HCT116 (cell line): ENCODE measurements at regions of chr4 and their contacts with region 1.

Region 1: GRCh38 chr4:110211007-110211769 is 12.8 kb upstream of the ELOVL6 start:
- DNase-seq: no peak
- ATAC-seq: peak; percentile 84
- H3K4me3 ChIP-seq: no peak overlapping the region
- H3K27ac ChIP-seq: no peak overlapping the region
- H3K4me1 ChIP-seq: no peaks in the 10 kb centered on the region
- H3K27me3 ChIP-seq: no peaks in the 10 kb centered on the region
- CTCF ChIP-seq: peak; percentile 51 to 82 (median 80); a peak in 5 of 6 replicates
- POLR2A ChIP-seq: no peak
- RAD21 ChIP-seq: peak; percentile 73

Region 2: DNA sequence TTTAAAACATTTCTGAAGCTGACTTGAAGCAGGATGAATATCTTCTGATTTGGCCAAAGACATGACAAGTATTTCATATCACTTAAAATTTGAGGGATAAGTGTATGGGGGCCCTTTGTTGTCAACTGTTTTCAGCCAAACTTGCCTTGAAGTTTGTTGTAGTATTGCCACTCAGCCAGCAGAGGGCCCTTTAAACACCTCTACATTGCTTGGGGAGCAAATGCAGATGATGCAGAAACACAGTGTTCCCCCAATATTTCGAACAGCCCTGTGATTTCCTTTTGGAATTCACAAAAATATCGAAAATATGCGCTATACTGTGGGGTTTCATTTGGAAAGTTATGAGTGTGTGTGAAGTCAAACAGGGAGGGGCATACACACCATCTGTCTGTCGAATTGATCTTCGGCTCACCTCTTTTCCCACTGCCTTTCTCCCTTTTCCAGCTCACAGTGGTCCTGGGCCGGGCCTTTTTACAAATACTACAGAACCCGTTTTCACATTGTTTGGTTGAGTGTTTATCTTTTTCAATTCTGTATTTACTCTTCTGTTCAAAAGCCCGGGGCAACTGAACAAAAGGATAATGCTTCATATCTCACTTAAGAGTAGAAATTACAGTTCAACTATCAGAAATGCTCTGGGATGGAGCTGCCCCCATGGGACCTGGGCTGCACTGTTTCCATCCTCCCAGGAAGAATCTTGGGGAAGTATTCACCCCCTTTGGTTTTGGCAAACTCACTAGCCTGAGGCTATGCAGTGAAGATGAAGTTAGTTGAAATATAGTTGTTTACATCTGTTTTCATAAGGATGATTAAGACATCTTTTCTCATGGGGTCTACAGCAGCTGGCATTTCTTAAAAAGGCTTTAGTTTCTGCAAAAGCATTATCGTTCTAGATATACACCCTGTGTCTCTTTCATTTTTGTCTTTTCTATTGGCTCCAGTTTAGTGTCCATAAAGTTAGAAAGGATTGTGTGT is 160.9 kb before region 1 on chr4:
- CTCF ChIA-PET with region 1: no interaction called
- POLR2A ChIA-PET with region 1: no interaction called
- RAD21 ChIA-PET with region 1: no interaction called
- intact Hi-C with region 1: loop called (anchors 1 kb)
- DNase-seq: peak; percentile 8
- ATAC-seq: peak; percentile 67; the same call in 1 of the 2 replicates
- H3K4me3 ChIP-seq: no peak overlapping the region
- H3K27ac ChIP-seq: no peak overlapping the region
- H3K4me1 ChIP-seq: no peaks in the 10 kb centered on the region
- H3K27me3 ChIP-seq: no peaks in the 10 kb centered on the region
- CTCF ChIP-seq: peak; percentile 52 to 83 (median 82); a peak in 5 of 6 replicates
- POLR2A ChIP-seq: no peak
- RAD21 ChIP-seq: peak; percentile 75

Region 3: GRCh38 chr4:110516106-110516922 is 305.1 kb after region 1 on chr4:
- CTCF ChIA-PET with region 1: no interaction called
- POLR2A ChIA-PET with region 1: no interaction called
- RAD21 ChIA-PET with region 1: no interaction called
- intact Hi-C with region 1: loop called (anchors 5 kb)
- DNase-seq: peak; percentile 72
- ATAC-seq: peak; percentile 98
- H3K4me3 ChIP-seq: peak overlapping the region; percentile 33 to 53
- H3K27ac ChIP-seq: no peak overlapping the region
- H3K4me1 ChIP-seq: peaks cover 0 to 9% of the 10 kb centered on the region in 2 experiments; a peak in 1 of 4 replicates
- H3K27me3 ChIP-seq: no peaks in the 10 kb centered on the region
- CTCF ChIP-seq: peak; percentile 73 to 84 (median 79)
- POLR2A ChIP-seq: no peak
- RAD21 ChIP-seq: peak; percentile 61